ENCODE measurements at regions of chr20 and their contacts with region 1.

Region 1: GRCh38 chr20:33909331-33909921 is 84.3 kb upstream of the RALY start:
- DNase-seq: peak; percentile 99
- ATAC-seq: peak; percentile 78
- H3K4me3 ChIP-seq: no peak overlapping the region
- H3K27ac ChIP-seq: peak overlapping the region; percentile 36
- H3K4me1 ChIP-seq: peaks cover 49% of the 10 kb centered on the region
- H3K27me3 ChIP-seq: no peaks in the 10 kb centered on the region
- CTCF ChIP-seq: no peak
- EP300 ChIP-seq: peak; percentile 74 to 88; a peak in 3 of 4 replicates
- POLR2A ChIP-seq: peak in 1 of 2 experiments; percentile 36; a peak in 1 of 4 replicates
- RAD21 ChIP-seq: peak; percentile 69

Region 2: DNA sequence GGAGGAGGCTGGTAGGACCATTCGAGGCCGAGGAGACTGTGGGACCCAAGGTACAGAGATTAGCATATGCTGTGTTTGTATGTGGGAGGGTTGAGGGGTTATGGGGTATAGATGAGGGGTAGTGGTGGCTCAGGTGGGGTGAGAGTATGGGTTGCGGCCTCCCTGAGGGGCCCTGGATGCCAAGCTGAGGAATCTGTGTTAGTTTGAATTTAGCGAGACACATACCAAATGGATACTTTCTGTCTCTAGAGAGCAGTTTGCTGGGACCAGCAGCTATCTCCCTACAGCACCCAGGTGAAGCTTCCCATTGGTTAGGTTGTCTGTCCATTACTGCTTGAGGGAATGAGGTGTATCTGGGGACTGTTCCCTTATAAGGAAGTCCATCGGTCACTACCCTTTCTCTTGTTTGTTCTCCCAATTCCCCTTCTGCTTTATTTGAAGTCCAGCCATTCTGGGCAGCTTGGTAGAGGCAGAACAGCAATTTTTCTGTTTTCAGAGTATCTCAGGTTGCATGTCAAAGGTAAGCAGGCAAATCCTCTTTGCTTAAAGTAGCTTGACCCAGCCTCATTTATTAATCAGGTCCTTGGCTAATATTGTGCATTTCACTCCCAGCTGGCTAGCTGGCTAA is 83.0 kb before region 1 on chr20:
- CTCF ChIA-PET with region 1: no interaction called
- POLR2A ChIA-PET with region 1: no interaction called
- in situ Hi-C with region 1: no loop called
- intact Hi-C with region 1: loop called (anchors 10 kb)
- DNase-seq: peak; percentile 88
- ATAC-seq: peak; percentile 82
- H3K4me3 ChIP-seq: peak overlapping the region in 1 of 3 experiments; percentile 8; a peak in 1 of 6 replicates
- H3K27ac ChIP-seq: peak overlapping the region; percentile 49
- H3K4me1 ChIP-seq: peaks cover 60% of the 10 kb centered on the region
- H3K27me3 ChIP-seq: no peaks in the 10 kb centered on the region
- CTCF ChIP-seq: no peak
- EP300 ChIP-seq: no peak
- POLR2A ChIP-seq: no peak
- RAD21 ChIP-seq: no peak

Region 3: GRCh38 chr20:33862709-33863403 is 46.6 kb before region 1 on chr20:
- CTCF ChIA-PET with region 1: no interaction called
- POLR2A ChIA-PET with region 1: no interaction called
- in situ Hi-C with region 1: no loop called
- intact Hi-C with region 1: no loop called
- DNase-seq: peak; percentile 76
- ATAC-seq: peak; percentile 74
- H3K4me3 ChIP-seq: peak overlapping the region in 2 of 3 experiments; percentile 13 to 59; a peak in 3 of 6 replicates
- H3K27ac ChIP-seq: no peak overlapping the region
- H3K4me1 ChIP-seq: peaks cover 42% of the 10 kb centered on the region
- H3K27me3 ChIP-seq: peaks cover 5 to 40% of the 10 kb centered on the region in 2 experiments
- CTCF ChIP-seq: peak; percentile 87
- EP300 ChIP-seq: no peak
- POLR2A ChIP-seq: no peak
- RAD21 ChIP-seq: peak; percentile 87